ENCODE measurements at regions of chr10 and their contacts with region 1.

Region 1: GRCh38 chr10:46534828-46535524 is 21.5 kb downstream of the GPRIN2 start:
- DNase-seq: peak in 2 of 5 donors; percentile 23
- ATAC-seq: no peak
- H3K4me3 ChIP-seq: no peak overlapping the region
- H3K27ac ChIP-seq: no peak overlapping the region
- H3K4me1 ChIP-seq: no peaks in the 10 kb centered on the region
- H3K27me3 ChIP-seq: peaks cover 3 to 66% (median 26%) of the 10 kb centered on the region in 9 donors
- CTCF ChIP-seq: no peak
- POLR2A ChIP-seq: no peak

Region 2: DNA sequence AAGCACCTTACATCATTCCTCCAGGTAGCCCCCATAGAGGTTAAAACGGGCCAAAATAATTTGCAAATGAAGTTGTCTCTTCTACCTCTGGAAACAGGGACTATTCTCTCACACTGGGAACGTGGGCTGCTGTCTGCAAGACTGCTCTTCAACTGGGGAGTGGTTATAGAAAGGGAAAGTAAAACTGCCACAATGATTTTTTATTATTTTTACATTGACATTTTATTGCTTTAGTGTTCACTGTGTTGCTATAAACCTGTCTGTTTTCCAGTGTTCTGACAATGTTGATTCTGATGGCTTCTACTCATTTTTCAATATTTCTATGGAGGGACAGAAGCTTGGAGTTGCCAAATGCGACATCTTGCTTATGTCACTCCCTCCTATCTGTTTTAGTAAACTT is 363.3 kb before region 1 on chr10:
- intact Hi-C with region 1: no loop called
- DNase-seq: no peak
- ATAC-seq: no peak
- H3K4me3 ChIP-seq: no peak overlapping the region
- H3K27ac ChIP-seq: no peak overlapping the region
- H3K4me1 ChIP-seq: no peaks in the 10 kb centered on the region
- H3K27me3 ChIP-seq: no peaks in the 10 kb centered on the region
- CTCF ChIP-seq: no peak
- POLR2A ChIP-seq: no peak

Region 3: DNA sequence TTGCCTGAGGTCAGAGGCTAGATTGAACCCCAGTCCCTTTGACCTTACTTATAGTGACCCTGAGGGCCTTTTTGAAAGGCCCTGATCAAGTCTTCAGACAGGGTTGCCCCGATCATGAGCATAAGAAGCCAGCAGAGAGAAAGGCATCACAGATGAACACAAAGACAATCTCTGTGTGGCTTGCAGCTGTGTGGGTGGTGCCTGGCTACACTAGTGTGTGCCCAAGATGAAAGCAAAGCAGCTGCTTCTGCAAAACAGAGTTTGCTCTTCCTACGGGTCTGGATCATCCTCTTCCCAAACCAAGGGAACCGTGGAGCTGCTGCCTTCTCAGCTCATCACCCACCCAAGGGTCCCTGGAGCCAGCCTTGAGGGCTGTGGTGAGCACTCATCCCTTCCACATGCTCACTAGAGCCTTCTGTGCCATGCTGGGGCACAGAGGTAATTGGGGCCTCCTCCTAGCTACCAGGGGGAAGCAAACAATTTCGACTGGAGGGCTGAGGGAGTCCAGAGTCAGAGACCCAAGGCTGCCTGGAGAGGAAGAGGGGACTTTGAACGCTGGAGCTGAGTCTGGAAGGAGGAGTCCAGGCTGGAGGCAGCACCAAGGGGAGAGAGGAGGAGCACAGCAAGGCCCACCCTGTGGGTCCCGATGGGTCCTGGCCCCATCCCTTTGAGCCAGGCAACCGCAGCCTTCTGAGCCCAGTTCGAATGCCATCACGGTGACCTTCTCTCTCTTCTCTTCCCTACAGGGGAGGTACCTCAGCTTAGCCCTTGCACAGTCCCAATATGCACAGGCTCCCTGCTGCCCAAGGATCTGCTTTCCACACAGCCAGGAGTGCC is 205.9 kb before region 1 on chr10:
- intact Hi-C with region 1: no loop called
- DNase-seq: no peak
- ATAC-seq: no peak
- H3K4me3 ChIP-seq: no peak overlapping the region
- H3K27ac ChIP-seq: no peak overlapping the region
- H3K4me1 ChIP-seq: no peaks in the 10 kb centered on the region
- H3K27me3 ChIP-seq: peaks cover 0 to 8% (median 0%) of the 10 kb centered on the region in 9 donors
- CTCF ChIP-seq: no peak
- POLR2A ChIP-seq: no peak

Region 4: DNA sequence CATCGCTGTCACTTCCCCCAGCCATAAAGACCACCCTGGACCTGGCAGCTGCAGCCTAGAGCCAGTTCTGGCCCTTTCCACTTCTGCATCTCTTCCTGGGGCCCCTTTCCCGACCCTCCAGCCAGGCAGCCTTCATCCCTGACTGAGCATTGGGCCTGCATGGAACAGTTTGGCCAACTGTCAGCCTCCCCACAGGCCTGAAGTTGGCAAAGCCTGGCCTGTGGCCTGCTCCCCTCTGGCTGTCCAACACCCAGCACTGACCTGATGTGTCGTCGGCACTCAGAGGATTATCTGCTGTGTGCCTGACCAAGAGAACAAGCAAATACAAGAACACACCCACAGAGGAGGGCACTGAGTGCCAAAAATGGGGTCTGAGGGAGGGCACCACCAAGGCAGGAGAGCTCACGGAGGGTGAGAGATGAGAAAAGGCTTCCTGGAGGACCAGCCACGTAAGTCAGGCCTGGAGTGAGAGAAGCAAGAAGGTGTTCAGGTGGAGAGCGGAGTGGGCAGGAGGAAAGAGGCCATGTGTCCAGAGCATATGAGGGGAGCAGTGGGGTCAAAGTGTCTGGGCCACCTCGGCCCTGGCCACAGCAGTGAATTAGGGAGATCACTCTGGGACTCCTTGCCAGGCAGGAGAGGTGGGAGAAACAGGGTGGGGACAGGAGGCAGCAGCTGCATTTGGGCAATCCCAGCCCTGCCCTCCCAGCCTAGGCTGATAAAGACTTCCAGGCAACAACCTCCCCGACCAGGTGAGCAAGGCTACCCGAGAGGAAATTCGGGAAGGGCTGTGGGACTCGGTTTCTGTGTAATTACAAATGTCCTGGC is 16.9 kb after region 1 on chr10:
- intact Hi-C with region 1: loop called in 1 of 10 experiments (anchors 2 kb)
- DNase-seq: peak; percentile 7 to 71 (median 22)
- ATAC-seq: no peak
- H3K4me3 ChIP-seq: no peak overlapping the region
- H3K27ac ChIP-seq: no peak overlapping the region
- H3K4me1 ChIP-seq: peaks cover 0 to 12% (median 3%) of the 10 kb centered on the region in 12 donors
- H3K27me3 ChIP-seq: peaks cover 16 to 88% (median 32%) of the 10 kb centered on the region in 9 donors
- CTCF ChIP-seq: no peak
- POLR2A ChIP-seq: no peak

Region 5: GRCh38 chr10:47076949-47077361 is 542.0 kb after region 1 on chr10:
- intact Hi-C with region 1: no loop called
- DNase-seq: no peak
- ATAC-seq: peak in 1 of 4 donors; percentile 30
- H3K4me3 ChIP-seq: no peak overlapping the region
- H3K27ac ChIP-seq: no peak overlapping the region
- H3K4me1 ChIP-seq: no peaks in the 10 kb centered on the region
- H3K27me3 ChIP-seq: peaks cover 0 to 6% (median 0%) of the 10 kb centered on the region in 9 donors
- CTCF ChIP-seq: no peak
- POLR2A ChIP-seq: no peak